ENCODE measurements at regions of chr10 and their contacts with region 1.

Region 1: GRCh38 chr10:73495884-73496674 is at the start of gene PPP3CB:
- DNase-seq: peak; percentile 82
- ATAC-seq: peak; percentile 87
- H3K4me3 ChIP-seq: peak within 1 kb of the TSS; percentile 75
- H3K27ac ChIP-seq: peak within 1 kb of the TSS; percentile 86
- H3K4me1 ChIP-seq: peaks cover 9% of the 10 kb centered on the region
- H3K27me3 ChIP-seq: no peaks in the 10 kb centered on the region
- CTCF ChIP-seq: no peak
- EP300 ChIP-seq: no peak
- POLR2A ChIP-seq: no peak
- RAD21 ChIP-seq: no peak
- polyA plus RNA-seq, gene PPP3CB: 13.9 to 19.7 TPM

Region 2: GRCh38 chr10:73252445-73253224 is 243.4 kb before region 1 on chr10 and contains the start of gene MRPS16:
- CTCF ChIA-PET with region 1: no interaction called
- POLR2A ChIA-PET with region 1: no interaction called
- RAD21 ChIA-PET with region 1: no interaction called
- SMC1A ChIA-PET with region 1: no interaction called
- in situ Hi-C with region 1: no loop called
- intact Hi-C with region 1: loop called (anchors 5 kb)
- DNase-seq: peak; percentile 88
- ATAC-seq: peak; percentile 87
- H3K4me3 ChIP-seq: peak within 1 kb of the TSS; percentile 93
- H3K27ac ChIP-seq: peak within 1 kb of the TSS; percentile 97
- H3K4me1 ChIP-seq: peaks cover 11% of the 10 kb centered on the region
- H3K27me3 ChIP-seq: no peaks in the 10 kb centered on the region
- CTCF ChIP-seq: no peak
- EP300 ChIP-seq: no peak
- POLR2A ChIP-seq: peak; percentile 99
- RAD21 ChIP-seq: no peak
- polyA plus RNA-seq, gene MRPS16: 43.4 to 98.5 TPM

Region 3: DNA sequence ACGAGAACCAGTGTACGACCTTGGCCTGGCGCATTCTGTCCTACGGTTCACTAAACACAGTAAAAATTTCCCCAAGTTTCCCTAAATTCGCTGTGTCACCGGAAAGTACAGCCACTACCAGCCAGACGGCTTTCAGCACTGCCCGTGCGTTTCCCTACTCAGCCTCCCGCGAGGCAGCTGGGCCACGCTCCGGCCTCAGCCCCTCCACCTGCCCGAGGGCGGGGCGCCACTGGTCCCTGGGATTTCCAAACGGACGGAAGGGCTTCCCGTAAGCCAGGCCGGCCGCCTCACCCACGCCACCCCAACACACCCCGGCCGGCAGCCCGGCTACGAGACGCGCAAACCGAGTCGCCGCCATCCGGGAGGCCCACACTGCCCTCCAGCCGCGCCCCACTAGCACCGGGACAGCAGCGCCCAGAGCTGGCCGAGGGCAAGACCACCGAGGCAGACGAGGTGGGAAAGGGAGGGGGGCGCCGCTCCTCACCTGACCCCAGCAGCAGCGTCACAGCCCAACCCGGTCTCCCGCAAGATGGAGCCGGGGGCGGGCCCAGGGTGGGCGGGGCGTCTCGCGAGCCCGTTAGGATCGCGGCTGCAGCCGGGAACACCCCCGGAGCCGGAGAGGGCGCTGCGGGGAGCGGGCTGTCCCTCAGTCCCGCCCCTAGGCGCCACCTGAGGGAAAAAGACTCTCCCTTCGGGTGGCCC is 82.4 kb before region 1 on chr10 and contains the start of gene ANXA7:
- CTCF ChIA-PET with region 1: no interaction called
- POLR2A ChIA-PET with region 1: interaction called, 11 read pairs
- RAD21 ChIA-PET with region 1: no interaction called
- SMC1A ChIA-PET with region 1: interaction called, 4 read pairs
- in situ Hi-C with region 1: no loop called
- intact Hi-C with region 1: no loop called
- DNase-seq: peak; percentile 47
- ATAC-seq: peak; percentile 97
- H3K4me3 ChIP-seq: peak within 1 kb of the TSS; percentile 84
- H3K27ac ChIP-seq: peak within 1 kb of the TSS; percentile 93
- H3K4me1 ChIP-seq: no peaks in the 10 kb centered on the region
- H3K27me3 ChIP-seq: no peaks in the 10 kb centered on the region
- CTCF ChIP-seq: peak; percentile 13 to 26 (median 15); a peak in 3 of 6 replicates
- EP300 ChIP-seq: no peak
- POLR2A ChIP-seq: peak; percentile 88
- RAD21 ChIP-seq: no peak
- polyA plus RNA-seq, gene ANXA7: 70.6 to 75.8 TPM

Measured in GM12878 (cell line).